CD4-positive, alpha-beta T cell (primary cell): ENCODE measurements at regions of chr9 and their contacts with region 1.

Region 1: GRCh38 chr9:133658442-133659431 is 22.6 kb downstream of the DBH start:
- DNase-seq: peak in 4 of 14 experiments; percentile 7 to 38 (median 26)
- ATAC-seq: no peak
- H3K4me3 ChIP-seq: no peak overlapping the region
- H3K4me3 Mint-ChIP-seq: peak overlapping the region; percentile 69
- H3K27ac ChIP-seq: no peak overlapping the region
- H3K27ac Mint-ChIP-seq: peak overlapping the region; percentile 93
- H3K4me1 ChIP-seq: peaks cover 50% of the 10 kb centered on the region
- H3K4me1 Mint-ChIP-seq: peaks cover 47% of the 10 kb centered on the region
- H3K27me3 ChIP-seq: peaks cover 5 to 18% of the 10 kb centered on the region in 2 experiments
- H3K27me3 Mint-ChIP-seq: peaks cover 33% of the 10 kb centered on the region
- CTCF ChIP-seq: no peak

Region 2: GRCh38 chr9:133301253-133302230 is 357.2 kb before region 1 on chr9:
- CTCF ChIA-PET with region 1: no interaction called
- POLR2A ChIA-PET with region 1: no interaction called
- intact Hi-C with region 1: no loop called
- DNase-seq: peak in 1 of 14 experiments; percentile 1
- ATAC-seq: no peak
- H3K4me3 ChIP-seq: no peak overlapping the region
- H3K4me3 Mint-ChIP-seq: no peak overlapping the region
- H3K27ac ChIP-seq: no peak overlapping the region
- H3K27ac Mint-ChIP-seq: no peak overlapping the region
- H3K4me1 ChIP-seq: no peaks in the 10 kb centered on the region
- H3K4me1 Mint-ChIP-seq: no peaks in the 10 kb centered on the region
- H3K27me3 ChIP-seq: no peaks in the 10 kb centered on the region
- H3K27me3 Mint-ChIP-seq: no peaks in the 10 kb centered on the region
- CTCF ChIP-seq: no peak

Region 3: DNA sequence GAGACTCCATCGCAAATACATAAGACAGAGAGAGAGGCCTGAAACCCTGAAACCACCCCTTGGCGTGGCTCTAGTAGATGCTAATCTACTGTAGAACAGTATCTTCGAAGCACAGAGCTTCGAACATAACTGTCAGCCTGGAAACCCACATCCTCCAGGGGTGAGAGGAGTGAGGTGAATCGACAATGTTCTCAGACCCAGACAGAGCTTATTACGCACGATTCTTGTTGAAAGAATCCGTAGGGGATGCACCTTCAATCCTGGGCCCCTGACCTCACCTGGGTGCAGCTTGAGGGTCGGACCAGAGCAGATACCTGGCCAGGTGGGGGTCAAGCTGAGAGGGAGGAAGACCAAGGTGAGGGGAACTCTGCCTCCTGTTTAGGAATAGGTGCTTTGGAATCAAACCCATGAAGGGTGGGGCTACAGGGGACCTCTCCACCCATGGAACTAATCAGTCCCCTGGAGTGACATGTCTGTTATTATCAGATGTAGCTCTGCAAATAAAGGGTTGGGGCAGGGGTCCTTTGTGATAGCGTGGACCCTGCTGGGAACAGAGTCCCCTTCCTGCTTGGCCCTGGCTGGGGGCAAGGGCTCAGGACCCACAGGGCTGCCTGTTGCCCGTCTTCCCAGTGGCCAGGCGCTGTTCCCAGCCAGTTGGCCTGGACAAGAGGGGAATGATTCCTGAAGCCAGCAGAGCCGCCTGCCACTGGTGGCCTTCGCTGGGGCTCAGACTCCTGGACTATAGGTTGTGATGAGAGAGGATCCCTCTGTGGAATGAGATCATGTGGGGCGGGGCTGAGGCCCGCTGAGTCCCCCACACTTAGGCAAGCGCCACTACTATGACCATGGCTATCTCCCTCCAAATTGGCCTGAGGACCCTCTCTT is 18.6 kb after region 1 on chr9:
- CTCF ChIA-PET with region 1: interaction called, 6 read pairs
- POLR2A ChIA-PET with region 1: interaction called, 16 read pairs
- intact Hi-C with region 1: loop called in 1 of 2 experiments (anchors 2 kb)
- DNase-seq: peak; percentile 54 to 92 (median 66)
- ATAC-seq: peak; percentile 93
- H3K4me3 ChIP-seq: no peak overlapping the region
- H3K4me3 Mint-ChIP-seq: peak overlapping the region; percentile 65
- H3K27ac ChIP-seq: peak overlapping the region; percentile 83 to 98
- H3K27ac Mint-ChIP-seq: peak overlapping the region; percentile 98
- H3K4me1 ChIP-seq: peaks cover 54% of the 10 kb centered on the region
- H3K4me1 Mint-ChIP-seq: peaks cover 57% of the 10 kb centered on the region
- H3K27me3 ChIP-seq: no peaks in the 10 kb centered on the region
- H3K27me3 Mint-ChIP-seq: no peaks in the 10 kb centered on the region
- CTCF ChIP-seq: no peak